HCT116 (cell line): ENCODE measurements at regions of chr6 and their contacts with region 1.

Region 1: GRCh38 chr6:53701333-53702218 is 36.0 kb upstream of the KLHL31 start:
- DNase-seq: no peak
- ATAC-seq: no peak
- H3K4me3 ChIP-seq: no peak overlapping the region
- H3K27ac ChIP-seq: no peak overlapping the region
- H3K4me1 ChIP-seq: no peaks in the 10 kb centered on the region
- H3K27me3 ChIP-seq: no peaks in the 10 kb centered on the region
- CTCF ChIP-seq: no peak
- POLR2A ChIP-seq: no peak
- RAD21 ChIP-seq: no peak

Region 2: DNA sequence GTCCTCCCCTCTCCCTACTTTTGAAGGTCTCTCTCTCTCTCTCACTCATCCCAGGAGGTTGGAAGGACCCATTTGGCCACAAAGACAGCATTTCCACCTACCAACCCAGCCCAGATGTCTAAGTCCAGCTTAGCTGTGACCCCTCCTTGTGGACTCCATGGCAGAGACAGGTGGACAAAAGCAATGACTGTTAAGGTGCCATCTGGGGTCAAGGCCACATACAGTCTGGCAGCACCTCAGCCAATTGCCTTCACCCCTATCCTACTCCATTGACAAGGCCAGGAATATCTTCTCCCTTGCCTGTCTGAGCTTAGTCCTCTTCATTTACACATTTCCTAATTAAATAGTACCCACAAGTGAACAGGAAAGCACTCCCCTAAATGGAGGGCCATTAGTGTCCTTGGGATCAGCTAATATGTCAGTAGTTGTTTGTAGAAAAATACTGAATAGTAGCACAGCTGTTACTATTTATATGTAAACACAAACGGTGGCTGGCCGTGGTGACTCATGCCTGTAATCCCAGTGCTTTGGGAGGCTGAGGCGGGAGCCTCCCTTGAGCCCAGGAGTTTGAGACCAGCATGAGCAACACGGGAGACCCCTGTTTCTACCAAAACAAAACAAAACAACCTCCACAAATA is 581.7 kb before region 1 on chr6:
- CTCF ChIA-PET with region 1: no interaction called
- POLR2A ChIA-PET with region 1: no interaction called
- RAD21 ChIA-PET with region 1: no interaction called
- intact Hi-C with region 1: loop called (anchors 10 kb)
- DNase-seq: peak; percentile 13
- ATAC-seq: peak; percentile 69
- H3K4me3 ChIP-seq: no peak overlapping the region
- H3K27ac ChIP-seq: no peak overlapping the region
- H3K4me1 ChIP-seq: peaks cover 4 to 12% of the 10 kb centered on the region in 2 experiments; a peak in 3 of 4 replicates
- H3K27me3 ChIP-seq: no peaks in the 10 kb centered on the region
- CTCF ChIP-seq: no peak
- POLR2A ChIP-seq: no peak
- RAD21 ChIP-seq: no peak